Heart left ventricle (tissue), 16 donors: ENCODE measurements at regions of chr20 and their contacts with region 1.

Region 1: DNA sequence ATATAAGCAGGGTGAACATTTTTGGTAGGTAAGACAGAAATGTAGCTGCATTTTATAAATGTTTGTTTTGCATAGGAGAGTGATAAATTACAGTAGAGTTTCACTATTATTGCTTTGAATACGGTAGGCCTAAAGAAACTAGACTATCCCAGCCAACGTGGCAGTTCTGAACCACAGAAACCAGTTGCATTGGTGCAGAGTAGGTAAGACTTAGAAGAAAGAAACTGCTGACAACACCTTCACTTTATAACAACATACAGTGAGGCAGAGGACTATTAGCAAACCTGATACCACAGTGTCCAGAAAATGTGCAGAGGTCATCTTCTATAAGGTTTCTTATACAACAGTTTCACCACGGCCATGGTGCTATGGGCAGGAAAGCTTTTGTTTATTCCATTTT is 566.1 kb downstream of the KIF16B start:
- DNase-seq: no peak
- ATAC-seq: no peak
- H3K4me3 ChIP-seq: no peak overlapping the region
- H3K27ac ChIP-seq: no peak overlapping the region
- H3K4me1 ChIP-seq: peaks cover 0 to 7% (median 0%) of the 10 kb centered on the region in 12 donors
- H3K27me3 ChIP-seq: no peaks in the 10 kb centered on the region
- CTCF ChIP-seq: no peak
- POLR2A ChIP-seq: no peak

Region 2: DNA sequence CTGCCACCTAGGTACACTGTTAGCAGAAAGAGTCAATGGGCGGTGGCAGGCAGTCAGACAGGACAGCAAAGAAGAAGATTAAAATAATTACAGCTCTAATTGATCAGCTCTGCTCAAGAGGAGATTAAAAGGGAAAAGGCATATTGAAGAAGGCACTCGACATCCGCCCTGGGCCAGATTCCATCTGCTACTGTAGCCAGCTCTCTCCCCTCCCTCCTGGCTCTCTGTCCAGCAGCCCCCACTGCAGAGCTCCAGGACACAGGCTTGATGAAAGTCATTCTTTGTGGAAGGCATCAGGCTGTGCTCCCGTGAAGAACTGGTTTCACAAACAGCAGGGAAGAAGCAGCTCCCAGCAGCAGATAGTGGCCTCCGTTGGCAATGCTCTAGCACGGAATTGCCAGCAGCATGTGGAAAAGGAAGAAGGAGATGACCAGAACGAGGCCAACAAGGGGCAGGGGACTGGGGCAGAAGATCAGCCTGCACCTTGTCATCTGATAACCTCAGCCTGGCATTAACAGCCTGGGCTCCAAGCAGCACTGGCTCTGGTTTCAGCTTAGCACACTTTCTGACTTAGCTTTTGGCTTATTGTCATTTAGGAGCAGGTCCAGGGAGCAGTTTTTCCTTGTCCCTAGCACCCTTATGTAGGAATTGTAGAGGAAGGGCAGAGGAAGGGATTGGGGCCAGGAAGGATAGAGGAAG is 100.2 kb after region 1 on chr20:
- intact Hi-C with region 1: loop called in 1 of 10 experiments (anchors 10 kb)
- DNase-seq: no peak
- ATAC-seq: peak in 2 of 4 donors; percentile 20 to 49
- H3K4me3 ChIP-seq: no peak overlapping the region
- H3K27ac ChIP-seq: no peak overlapping the region
- H3K4me1 ChIP-seq: peaks cover 0 to 11% (median 4%) of the 10 kb centered on the region in 12 donors
- H3K27me3 ChIP-seq: no peaks in the 10 kb centered on the region
- CTCF ChIP-seq: no peak
- POLR2A ChIP-seq: no peak